H1 (cell line): ENCODE measurements at regions of chr18 and their contacts with region 1.

Region 1: GRCh38 chr18:58067601-58068000 is 23.6 kb downstream of the NEDD4L start:
- DNase-seq: no peak
- H3K4me3 ChIP-seq: no peak overlapping the region
- H3K27ac ChIP-seq: no peak overlapping the region
- H3K4me1 ChIP-seq: peaks cover 4 to 8% (median 6%) of the 10 kb centered on the region in 4 experiments; a peak in 4 of 7 replicates
- H3K27me3 ChIP-seq: no peaks in the 10 kb centered on the region
- CTCF ChIP-seq: peak in 1 of 3 experiments; percentile 13; a peak in 1 of 4 replicates
- EP300 ChIP-seq: no peak
- POLR2A ChIP-seq: no peak
- RAD21 ChIP-seq: peak in 1 of 2 experiments; percentile 25; a peak in 1 of 4 replicates

Region 2: DNA sequence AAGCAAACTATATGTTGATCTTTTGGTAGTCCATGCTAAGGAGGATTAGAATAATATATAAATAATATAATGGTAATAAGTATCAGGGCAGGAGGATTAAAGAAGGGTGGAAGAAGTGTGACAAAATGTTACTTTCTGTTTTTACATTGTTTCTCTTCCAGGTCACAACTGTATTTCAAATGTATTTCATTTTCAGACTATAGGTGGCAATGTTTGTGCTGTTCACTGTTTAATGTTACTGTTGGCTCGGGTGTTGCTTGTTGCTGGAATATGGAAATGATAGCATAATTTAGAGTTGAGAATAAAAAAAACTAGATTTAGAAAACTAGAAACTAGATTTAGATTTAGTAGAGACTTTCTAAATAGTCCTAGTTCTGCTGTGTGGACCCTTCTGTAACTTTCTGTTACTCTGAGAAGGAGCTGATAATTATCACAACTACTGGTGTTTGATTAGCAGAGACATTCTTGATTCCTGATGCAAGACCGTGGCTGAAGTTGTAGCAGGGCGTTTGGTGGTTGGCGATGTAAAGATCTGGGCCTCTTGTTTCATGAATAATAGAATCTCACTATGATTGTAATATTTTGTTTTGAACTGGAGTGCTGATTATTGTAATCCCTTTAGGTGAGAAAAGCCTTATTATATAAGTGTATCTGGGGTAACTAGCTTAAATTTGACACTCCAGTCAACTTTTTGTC is 15.7 kb before region 1 on chr18:
- CTCF ChIA-PET with region 1: interaction called, 23 read pairs
- POLR2A ChIA-PET with region 1: interaction called, 6 read pairs
- DNase-seq: no peak
- H3K4me3 ChIP-seq: no peak overlapping the region
- H3K27ac ChIP-seq: no peak overlapping the region
- H3K4me1 ChIP-seq: peaks cover 0 to 14% (median 10%) of the 10 kb centered on the region in 4 experiments; a peak in 3 of 7 replicates
- H3K27me3 ChIP-seq: no peaks in the 10 kb centered on the region; a peak in 1 of 7 replicates
- CTCF ChIP-seq: no peak
- EP300 ChIP-seq: no peak
- POLR2A ChIP-seq: no peak
- RAD21 ChIP-seq: 0 out of 4 replicates have a peak, but pooled peaks have one; percentile 2 to 10

Region 3: DNA sequence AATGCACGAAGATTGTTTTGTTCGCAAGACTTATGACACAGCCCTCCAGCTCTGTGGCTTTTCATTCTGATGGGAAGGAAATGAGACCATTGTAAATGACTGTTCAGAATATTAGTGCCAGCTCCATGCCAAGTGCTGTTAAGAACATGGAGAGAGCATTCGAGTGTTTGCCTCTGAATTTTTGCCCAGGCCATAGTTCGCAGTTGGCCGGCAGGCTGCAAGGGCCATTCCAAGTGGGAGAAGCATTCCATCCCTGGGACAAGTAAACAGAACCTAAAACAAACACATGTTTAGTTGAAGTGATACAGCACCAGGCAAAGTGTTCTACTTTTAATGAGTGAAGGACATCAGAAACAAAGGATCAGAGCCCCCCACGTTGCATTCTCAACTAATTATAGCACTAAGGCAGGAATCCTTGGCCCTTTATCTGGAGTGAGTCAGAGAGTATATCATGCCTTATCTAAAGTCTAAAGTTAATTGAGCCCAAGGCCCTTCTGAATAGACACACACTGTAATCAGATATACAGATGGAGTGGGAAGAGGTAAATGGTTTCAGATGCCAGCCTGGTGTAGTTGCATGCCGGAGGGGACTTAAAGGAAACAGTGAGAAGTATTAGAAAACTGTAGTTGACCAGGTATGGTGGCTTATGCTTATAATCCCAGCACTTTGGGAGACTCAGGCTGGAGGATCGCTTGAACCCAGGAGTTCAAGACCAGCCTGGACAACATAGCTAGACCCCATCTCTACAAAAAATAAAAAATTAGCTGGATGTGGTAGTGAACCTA is 29.7 kb after region 1 on chr18:
- CTCF ChIA-PET with region 1: interaction called, 22 read pairs
- POLR2A ChIA-PET with region 1: interaction called, 3 read pairs
- DNase-seq: no peak
- H3K4me3 ChIP-seq: no peak overlapping the region
- H3K27ac ChIP-seq: no peak overlapping the region
- H3K4me1 ChIP-seq: peaks cover 3 to 36% (median 25%) of the 10 kb centered on the region in 4 experiments
- H3K27me3 ChIP-seq: no peaks in the 10 kb centered on the region
- CTCF ChIP-seq: no peak
- EP300 ChIP-seq: no peak
- POLR2A ChIP-seq: no peak
- RAD21 ChIP-seq: no peak

Region 4: GRCh38 chr18:58117786-58118403 is 50.3 kb after region 1 on chr18:
- CTCF ChIA-PET with region 1: interaction called, 10 read pairs
- POLR2A ChIA-PET with region 1: no interaction called
- DNase-seq: no peak
- H3K4me3 ChIP-seq: no peak overlapping the region
- H3K27ac ChIP-seq: no peak overlapping the region
- H3K4me1 ChIP-seq: peaks cover 0 to 16% (median 5%) of the 10 kb centered on the region in 4 experiments; a peak in 6 of 7 replicates
- H3K27me3 ChIP-seq: no peaks in the 10 kb centered on the region
- CTCF ChIP-seq: no peak
- EP300 ChIP-seq: no peak
- POLR2A ChIP-seq: no peak
- RAD21 ChIP-seq: no peak